ENCODE measurements at regions of chr3 and their contacts with region 1.

Region 1: GRCh38 chr3:28328188-28329151 is 20.1 kb upstream of the ZCWPW2 start:
- DNase-seq: no peak
- H3K4me3 Mint-ChIP-seq: no peak overlapping the region
- H3K27ac Mint-ChIP-seq: no peak overlapping the region
- H3K4me1 Mint-ChIP-seq: peaks cover 22% of the 10 kb centered on the region
- H3K27me3 Mint-ChIP-seq: no peaks in the 10 kb centered on the region

Region 2: DNA sequence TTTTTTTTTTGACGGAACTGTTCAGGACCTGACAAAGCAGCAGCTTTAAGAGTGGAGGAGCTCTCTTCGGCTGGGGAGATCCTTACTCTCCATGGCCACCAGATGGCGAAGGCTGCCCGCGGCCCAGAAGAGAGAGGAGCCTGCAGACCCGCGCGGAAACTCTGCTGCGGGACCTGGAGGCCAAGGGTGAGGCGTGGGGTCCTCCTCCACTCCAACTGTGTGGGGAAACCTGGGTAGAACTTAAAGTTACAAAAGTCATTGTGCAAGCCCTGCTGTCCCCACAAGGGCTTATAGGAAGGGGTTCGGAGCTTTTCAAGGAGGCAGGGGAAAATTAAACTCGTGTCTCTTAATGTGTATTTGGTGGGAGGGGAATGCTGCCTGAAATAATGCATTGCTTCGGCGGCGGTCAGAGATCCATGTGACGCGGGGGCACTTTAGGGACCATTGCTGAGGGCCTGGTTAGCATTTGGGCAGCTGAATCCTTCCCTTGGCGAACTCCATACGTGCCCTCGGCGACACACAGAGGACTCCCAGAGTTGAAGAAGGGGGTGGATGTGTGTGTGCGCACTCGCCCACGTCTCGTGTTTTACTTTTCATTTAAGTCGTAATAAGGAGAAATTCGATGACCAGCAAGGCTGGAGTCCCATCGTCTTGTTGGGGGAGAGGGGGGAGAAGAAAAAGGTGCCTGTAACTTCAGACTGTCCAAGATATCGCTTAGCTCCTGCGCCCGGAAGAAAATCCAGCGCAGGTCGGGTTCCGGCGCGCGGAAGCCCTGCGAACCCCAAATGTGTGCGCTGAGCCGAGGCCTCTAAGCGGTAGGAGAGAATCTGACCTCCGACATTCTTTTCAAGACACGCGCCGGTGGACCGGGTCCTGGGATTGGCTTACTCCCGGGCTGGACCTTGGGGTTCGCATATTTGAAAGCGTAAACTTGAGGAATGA is 616.1 kb before region 1 on chr3:
- CTCF ChIA-PET with region 1: interaction called, 52 read pairs
- DNase-seq: peak; percentile 84
- H3K4me3 Mint-ChIP-seq: peak overlapping the region; percentile 82
- H3K27ac Mint-ChIP-seq: peak overlapping the region; percentile 49
- H3K4me1 Mint-ChIP-seq: peaks cover 30% of the 10 kb centered on the region
- H3K27me3 Mint-ChIP-seq: peaks cover 74% of the 10 kb centered on the region

Region 3: GRCh38 chr3:27721717-27722542 is 606.5 kb before region 1 on chr3 and contains the start of gene EOMES:
- CTCF ChIA-PET with region 1: interaction called, 32 read pairs
- DNase-seq: peak; percentile 81
- H3K4me3 Mint-ChIP-seq: peak within 1 kb of the TSS; percentile 84
- H3K27ac Mint-ChIP-seq: peak within 1 kb of the TSS; percentile 68
- H3K4me1 Mint-ChIP-seq: peaks cover 36% of the 10 kb centered on the region
- H3K27me3 Mint-ChIP-seq: peaks cover 93% of the 10 kb centered on the region

Region 4: GRCh38 chr3:28273837-28274236 is 54.6 kb before region 1 on chr3:
- CTCF ChIA-PET with region 1: no interaction called
- DNase-seq: no peak
- H3K4me3 Mint-ChIP-seq: no peak overlapping the region
- H3K27ac Mint-ChIP-seq: no peak overlapping the region
- H3K4me1 Mint-ChIP-seq: peaks cover 6% of the 10 kb centered on the region
- H3K27me3 Mint-ChIP-seq: no peaks in the 10 kb centered on the region

Region 5: GRCh38 chr3:28286595-28286994 is 41.9 kb before region 1 on chr3:
- CTCF ChIA-PET with region 1: interaction called, 15 read pairs
- DNase-seq: no peak
- H3K4me3 Mint-ChIP-seq: no peak overlapping the region
- H3K27ac Mint-ChIP-seq: no peak overlapping the region
- H3K4me1 Mint-ChIP-seq: no peaks in the 10 kb centered on the region
- H3K27me3 Mint-ChIP-seq: no peaks in the 10 kb centered on the region

Region 6: GRCh38 chr3:28317438-28318022 is 10.9 kb before region 1 on chr3:
- CTCF ChIA-PET with region 1: interaction called, 23 read pairs
- DNase-seq: peak; percentile 43
- H3K4me3 Mint-ChIP-seq: no peak overlapping the region
- H3K27ac Mint-ChIP-seq: no peak overlapping the region
- H3K4me1 Mint-ChIP-seq: peaks cover 10% of the 10 kb centered on the region
- H3K27me3 Mint-ChIP-seq: no peaks in the 10 kb centered on the region